ENCODE measurements at regions of chr14 and their contacts with region 1.

Region 1: DNA sequence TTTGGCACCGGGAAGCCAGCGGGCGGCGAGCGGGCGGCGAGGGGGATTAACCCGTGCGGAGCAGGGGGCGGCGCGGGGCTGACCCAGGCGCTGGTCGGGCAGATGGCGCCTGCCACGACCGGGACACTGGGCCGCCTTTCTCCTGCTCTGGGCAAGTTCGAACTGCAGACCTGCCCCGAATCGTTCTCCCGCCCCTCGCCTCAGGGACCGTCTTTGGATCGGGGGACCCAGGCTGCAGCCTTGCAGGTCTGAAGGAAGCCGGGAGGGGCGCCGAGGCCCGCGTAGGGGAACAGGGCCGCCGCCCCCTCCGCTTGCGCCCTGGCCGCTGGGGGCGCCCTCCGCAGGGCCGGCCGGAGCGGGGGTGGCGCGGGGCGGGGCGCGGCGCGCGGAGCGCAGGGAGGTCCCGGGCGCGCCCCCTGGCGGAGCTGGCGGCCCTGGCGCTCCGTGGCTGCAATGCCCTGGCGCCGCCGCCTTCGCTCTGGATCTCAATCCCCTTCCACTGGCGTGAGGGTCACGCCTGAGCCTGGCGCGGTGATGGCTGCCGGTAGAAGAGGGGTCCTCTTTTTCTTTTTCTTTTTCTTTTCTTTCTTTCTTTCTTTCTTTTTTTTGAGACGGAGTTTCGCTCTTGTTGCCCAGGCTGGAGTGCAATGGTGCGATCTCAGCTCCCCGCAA is 449 bp upstream of the LTBP2 start:
- DNase-seq: no peak
- H3K4me3 ChIP-seq: peak overlapping the region; percentile 70 to 87 (median 72)
- H3K27ac ChIP-seq: peak overlapping the region; percentile 53 to 71 (median 62)
- H3K4me1 ChIP-seq: peaks cover 22 to 51% (median 32%) of the 10 kb centered on the region in 4 donors
- H3K27me3 ChIP-seq: peaks cover 0 to 33% (median 4%) of the 10 kb centered on the region in 4 donors
- CTCF ChIP-seq: peak; percentile 63 to 81 (median 77)
- EP300 ChIP-seq: no peak
- POLR2A ChIP-seq: no peak

Region 2: GRCh38 chr14:74062829-74063190 is 549.7 kb before region 1 on chr14:
- intact Hi-C with region 1: no loop called
- DNase-seq: no peak
- H3K4me3 ChIP-seq: no peak overlapping the region
- H3K27ac ChIP-seq: no peak overlapping the region
- H3K4me1 ChIP-seq: no peaks in the 10 kb centered on the region
- H3K27me3 ChIP-seq: no peaks in the 10 kb centered on the region
- CTCF ChIP-seq: no peak
- EP300 ChIP-seq: no peak
- POLR2A ChIP-seq: no peak

Region 3: GRCh38 chr14:74275241-74275841 is 337.1 kb before region 1 on chr14:
- intact Hi-C with region 1: no loop called
- DNase-seq: no peak
- H3K4me3 ChIP-seq: no peak overlapping the region
- H3K27ac ChIP-seq: no peak overlapping the region
- H3K4me1 ChIP-seq: no peaks in the 10 kb centered on the region
- H3K27me3 ChIP-seq: no peaks in the 10 kb centered on the region
- CTCF ChIP-seq: no peak
- EP300 ChIP-seq: no peak
- POLR2A ChIP-seq: no peak

Region 4: GRCh38 chr14:74362361-74362915 is 250.0 kb before region 1 on chr14:
- intact Hi-C with region 1: loop called (anchors 5 kb)
- DNase-seq: no peak
- H3K4me3 ChIP-seq: no peak overlapping the region
- H3K27ac ChIP-seq: no peak overlapping the region
- H3K4me1 ChIP-seq: peaks cover 0 to 6% (median 2%) of the 10 kb centered on the region in 4 donors
- H3K27me3 ChIP-seq: peaks cover 0 to 46% (median 0%) of the 10 kb centered on the region in 4 donors
- CTCF ChIP-seq: peak; percentile 92 to 99 (median 92)
- EP300 ChIP-seq: no peak
- POLR2A ChIP-seq: no peak

Region 5: GRCh38 chr14:74501135-74501614 is 111.3 kb before region 1 on chr14:
- intact Hi-C with region 1: loop called (anchors 1 kb)
- DNase-seq: no peak
- H3K4me3 ChIP-seq: no peak overlapping the region
- H3K27ac ChIP-seq: no peak overlapping the region
- H3K4me1 ChIP-seq: peaks cover 0 to 15% (median 11%) of the 10 kb centered on the region in 4 donors
- H3K27me3 ChIP-seq: no peaks in the 10 kb centered on the region
- CTCF ChIP-seq: peak; percentile 61 to 76 (median 65)
- EP300 ChIP-seq: no peak
- POLR2A ChIP-seq: no peak

Region 6: DNA sequence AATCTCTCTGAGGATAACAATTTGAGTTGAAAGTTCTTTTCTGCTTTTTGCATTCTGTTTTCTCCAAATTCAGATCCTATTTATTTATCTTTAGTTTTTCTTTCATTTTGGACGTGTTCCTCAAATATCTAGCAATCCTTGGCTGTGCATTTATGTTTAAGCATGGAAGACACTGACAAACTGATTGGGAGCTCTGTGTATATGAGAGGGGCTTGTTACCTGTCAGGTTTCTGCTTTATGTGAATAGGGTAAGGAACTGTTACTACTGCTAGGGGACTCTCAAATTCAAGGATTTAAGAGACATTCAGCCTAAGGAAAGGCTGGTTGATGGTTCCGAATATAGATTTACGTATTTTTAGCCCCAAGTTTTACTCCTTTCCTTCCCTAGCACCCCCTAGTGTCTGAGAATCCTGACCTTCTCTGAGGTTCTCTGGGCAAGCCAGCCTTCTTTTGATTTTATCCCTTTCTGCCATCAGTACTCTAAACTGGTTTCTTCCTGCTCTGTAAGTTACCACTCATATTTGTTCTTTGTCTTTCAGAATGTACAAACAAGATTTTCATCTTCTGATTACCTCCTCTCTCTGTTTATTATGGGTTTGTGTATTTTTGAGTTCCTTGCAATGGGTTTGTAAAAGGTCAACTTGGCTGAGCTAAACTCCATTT is 181.2 kb after region 1 on chr14:
- intact Hi-C with region 1: loop called (anchors 10 kb)
- DNase-seq: no peak
- H3K4me3 ChIP-seq: no peak overlapping the region
- H3K27ac ChIP-seq: peak overlapping the region in 2 of 4 donors; percentile 27 to 32
- H3K4me1 ChIP-seq: peaks cover 18 to 26% (median 25%) of the 10 kb centered on the region in 4 donors
- H3K27me3 ChIP-seq: no peaks in the 10 kb centered on the region
- CTCF ChIP-seq: peak in 1 of 3 experiments; percentile 23
- EP300 ChIP-seq: no peak
- POLR2A ChIP-seq: no peak